Heart right ventricle (tissue), 16 donors: ENCODE measurements at regions of chr18 and their contacts with region 1.

Region 1: GRCh38 chr18:75209129-75209950 is at the start of gene PTGR3:
- DNase-seq: peak; percentile 87 to 93
- ATAC-seq: peak; percentile 54 to 82 (median 72)
- H3K4me3 ChIP-seq: peak within 1 kb of the TSS; percentile 74 to 99 (median 94)
- H3K27ac ChIP-seq: peak within 1 kb of the TSS; percentile 99 to 100 (median 100)
- H3K4me1 ChIP-seq: peaks cover 9 to 68% (median 59%) of the 10 kb centered on the region in 9 donors
- H3K27me3 ChIP-seq: no peaks in the 10 kb centered on the region
- CTCF ChIP-seq: no peak
- total RNA-seq, gene PTGR3: 48.5 to 71.3 (median 58.8) TPM

Region 2: DNA sequence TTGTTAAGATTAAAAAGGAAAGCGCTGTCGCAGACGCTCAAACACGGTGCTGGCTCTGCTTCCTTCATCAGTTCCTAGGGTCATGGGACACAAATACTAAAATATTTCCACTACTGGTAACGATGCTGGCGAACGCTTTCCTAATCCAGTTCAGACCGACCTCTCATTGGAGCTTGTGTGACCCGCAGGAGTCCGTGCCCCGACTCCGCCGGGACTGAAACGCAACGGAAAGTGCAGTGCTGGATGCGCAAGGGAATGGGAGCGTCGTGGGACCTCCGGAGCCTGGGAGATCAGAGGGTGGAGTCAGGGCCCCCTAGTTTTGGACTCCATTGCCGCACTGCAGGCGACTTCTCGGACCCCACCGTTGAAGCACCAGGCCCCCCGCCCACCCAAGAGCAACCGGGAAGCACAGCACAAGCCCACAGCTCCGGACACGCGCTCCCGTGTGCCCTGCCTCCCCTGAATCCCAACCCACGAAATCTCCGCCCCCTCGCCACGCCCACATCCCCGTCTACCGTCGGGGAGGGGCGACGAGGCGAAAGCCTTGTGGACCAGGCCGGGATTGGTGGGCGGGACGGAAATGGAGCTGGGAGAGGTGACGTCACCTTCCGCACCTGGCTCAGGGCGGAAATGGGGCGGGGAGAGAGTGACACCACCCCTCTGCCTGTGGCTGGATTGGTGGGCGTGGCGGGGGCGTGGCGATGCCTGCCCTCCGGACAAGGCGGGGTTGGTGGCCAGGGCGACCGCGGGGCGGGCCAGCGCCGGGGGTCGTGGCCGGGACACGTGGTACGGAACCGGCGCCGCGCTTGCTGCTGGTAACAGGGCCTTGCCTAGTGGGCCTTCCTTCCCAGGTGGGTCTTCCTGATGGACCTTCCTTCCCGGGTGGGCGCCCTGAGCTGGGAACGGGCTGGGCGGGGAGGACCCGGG is 713.5 kb before region 1 on chr18 and contains the start of gene CNDP2:
- intact Hi-C with region 1: no loop called
- DNase-seq: peak; percentile 100
- ATAC-seq: peak; percentile 96 to 99 (median 97)
- H3K4me3 ChIP-seq: peak within 1 kb of the TSS; percentile 61 to 99 (median 87)
- H3K27ac ChIP-seq: peak within 1 kb of the TSS; percentile 78 to 98 (median 94)
- H3K4me1 ChIP-seq: peaks cover 0 to 56% (median 33%) of the 10 kb centered on the region in 9 donors
- H3K27me3 ChIP-seq: no peaks in the 10 kb centered on the region
- CTCF ChIP-seq: no peak
- total RNA-seq, gene CNDP2: 50.2 to 117 (median 75.3) TPM

Region 3: GRCh38 chr18:74963820-74964446 is 245.4 kb before region 1 on chr18:
- intact Hi-C with region 1: loop called in 1 of 10 experiments (anchors 10 kb)
- DNase-seq: peak in 1 of 2 donors; percentile 61
- ATAC-seq: peak; percentile 68 to 93 (median 84)
- H3K4me3 ChIP-seq: no peak overlapping the region
- H3K27ac ChIP-seq: no peak overlapping the region
- H3K4me1 ChIP-seq: peaks cover 0 to 11% (median 4%) of the 10 kb centered on the region in 9 donors
- H3K27me3 ChIP-seq: no peaks in the 10 kb centered on the region
- CTCF ChIP-seq: peak in 7 of 9 donors; percentile 42 to 58 (median 52)

Region 4: GRCh38 chr18:75167759-75168618 is 41.4 kb before region 1 on chr18:
- intact Hi-C with region 1: loop called in 3 of 10 experiments (anchors 2 to 5 kb)
- DNase-seq: peak in 1 of 2 donors; percentile 61
- ATAC-seq: peak in 6 of 8 donors; percentile 18 to 64 (median 37)
- H3K4me3 ChIP-seq: peak overlapping the region in 9 of 10 donors; percentile 2 to 41 (median 34)
- H3K27ac ChIP-seq: peak overlapping the region; percentile 13 to 93 (median 56)
- H3K4me1 ChIP-seq: peaks cover 5 to 51% (median 17%) of the 10 kb centered on the region in 9 donors
- H3K27me3 ChIP-seq: no peaks in the 10 kb centered on the region
- CTCF ChIP-seq: no peak

Region 5: DNA sequence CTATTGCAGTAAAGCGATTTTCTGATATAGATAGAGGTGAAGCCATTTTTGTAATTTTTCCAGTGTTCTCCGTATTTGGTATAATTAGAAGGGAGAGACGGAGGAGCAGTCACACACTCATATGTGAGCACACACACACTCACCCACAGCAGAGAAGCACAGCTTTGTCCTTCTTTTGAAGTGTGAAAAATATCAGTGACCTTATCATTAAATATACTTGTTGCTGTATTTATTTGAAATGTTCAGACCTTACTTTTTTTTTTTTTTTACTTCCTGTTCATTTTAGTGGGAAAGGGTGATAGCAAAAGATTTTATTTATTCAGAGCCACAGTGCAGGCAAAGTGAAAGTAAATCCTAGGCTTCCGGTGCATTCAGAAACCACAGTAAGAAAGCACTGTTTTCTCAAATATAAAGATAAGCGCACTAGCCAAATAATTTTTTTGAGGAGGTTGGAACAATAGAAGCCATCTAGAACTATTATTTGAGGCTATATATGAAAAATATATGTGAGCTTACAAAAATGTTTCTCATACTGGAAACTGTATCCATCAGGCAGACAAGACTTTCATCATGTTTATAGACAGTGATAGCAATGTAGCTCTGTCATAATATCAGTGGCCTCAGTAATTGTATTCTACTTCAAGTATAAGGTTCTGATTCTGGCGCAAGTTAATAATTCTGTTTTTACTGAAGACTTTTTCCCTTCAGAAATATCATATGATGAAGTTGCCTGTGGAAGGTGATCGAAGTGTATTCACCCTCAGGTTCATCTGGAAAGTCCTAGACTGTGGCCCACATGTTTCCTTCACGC is 38.5 kb after region 1 on chr18:
- intact Hi-C with region 1: loop called in 6 of 10 experiments (anchors 2 to 5 kb)
- DNase-seq: peak in 1 of 2 donors; percentile 20
- ATAC-seq: peak in 7 of 8 donors; percentile 37 to 78 (median 61)
- H3K4me3 ChIP-seq: peak overlapping the region in 9 of 10 donors; percentile 14 to 52 (median 40)
- H3K27ac ChIP-seq: peak overlapping the region; percentile 14 to 85 (median 76)
- H3K4me1 ChIP-seq: peaks cover 4 to 63% (median 39%) of the 10 kb centered on the region in 9 donors
- H3K27me3 ChIP-seq: no peaks in the 10 kb centered on the region
- CTCF ChIP-seq: no peak